Adrenal gland (tissue), 19 donors: ENCODE measurements at regions of chr12 and their contacts with region 1.

Region 1: GRCh38 chr12:104286538-104287482 is 16.7 kb upstream of the EID3 start:
- DNase-seq: peak; percentile 93 to 99 (median 96)
- H3K4me3 ChIP-seq: peak overlapping the region; percentile 2 to 94 (median 68)
- H3K27ac ChIP-seq: peak overlapping the region; percentile 93 to 99 (median 96)
- H3K4me1 ChIP-seq: peaks cover 24 to 36% of the 10 kb centered on the region in 2 donors
- H3K27me3 ChIP-seq: no peaks in the 10 kb centered on the region
- CTCF ChIP-seq: peak in 2 of 6 experiments; percentile 13 to 18
- POLR2A ChIP-seq: peak; percentile 89 to 95

Region 2: GRCh38 chr12:104121001-104121400 is 165.8 kb before region 1 on chr12:
- intact Hi-C with region 1: no loop called
- DNase-seq: no peak
- H3K4me3 ChIP-seq: no peak overlapping the region
- H3K27ac ChIP-seq: peak overlapping the region in 1 of 5 donors; percentile 23
- H3K4me1 ChIP-seq: peaks cover 20 to 30% of the 10 kb centered on the region in 2 donors
- H3K27me3 ChIP-seq: no peaks in the 10 kb centered on the region
- CTCF ChIP-seq: no peak
- POLR2A ChIP-seq: peak in 1 of 2 donors; percentile 32

Region 3: DNA sequence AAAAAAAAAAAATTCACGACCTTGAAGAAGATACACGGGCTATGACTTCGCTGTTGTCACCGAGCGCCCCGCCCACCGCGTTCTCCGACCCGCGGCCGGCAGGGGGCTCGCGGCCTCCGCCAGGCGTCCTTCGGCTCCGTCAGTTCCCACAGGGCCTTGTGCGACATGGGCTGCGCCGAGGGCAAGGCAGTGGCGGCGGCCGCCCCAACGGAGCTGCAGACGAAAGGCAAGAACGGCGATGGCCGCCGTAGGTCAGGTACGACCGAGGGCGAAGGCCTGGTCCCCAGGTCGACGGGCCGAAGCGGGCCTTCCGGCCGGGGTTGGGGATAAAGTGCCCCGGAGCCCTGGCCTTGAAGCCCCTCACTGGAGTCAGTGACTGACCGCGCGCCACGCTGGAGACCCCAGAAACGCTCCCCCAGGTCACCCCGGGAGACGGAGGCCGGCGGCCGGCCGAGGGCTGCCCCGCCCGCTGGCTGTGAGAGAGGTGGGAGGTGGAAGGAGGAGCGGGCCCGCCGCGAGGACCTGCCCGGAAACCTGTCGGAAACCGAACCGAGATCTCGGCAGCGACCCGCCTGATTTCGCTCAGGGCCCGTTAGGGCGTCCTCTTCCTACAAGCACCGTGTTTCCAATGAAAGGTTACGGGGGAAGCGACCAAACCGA is 71.0 kb before region 1 on chr12 and contains the start of gene TXNRD1:
- intact Hi-C with region 1: loop called (anchors 5 kb)
- DNase-seq: peak; percentile 88 to 93 (median 91)
- H3K4me3 ChIP-seq: peak within 1 kb of the TSS; percentile 10 to 81 (median 37)
- H3K27ac ChIP-seq: peak within 1 kb of the TSS; percentile 71 to 98 (median 91)
- H3K4me1 ChIP-seq: peaks cover 31 to 34% of the 10 kb centered on the region in 2 donors
- H3K27me3 ChIP-seq: no peaks in the 10 kb centered on the region
- CTCF ChIP-seq: peak; percentile 71 to 93 (median 87)
- POLR2A ChIP-seq: peak; percentile 68 to 92
- total RNA-seq, gene TXNRD1: 232 to 487 (median 294) TPM

Region 4: DNA sequence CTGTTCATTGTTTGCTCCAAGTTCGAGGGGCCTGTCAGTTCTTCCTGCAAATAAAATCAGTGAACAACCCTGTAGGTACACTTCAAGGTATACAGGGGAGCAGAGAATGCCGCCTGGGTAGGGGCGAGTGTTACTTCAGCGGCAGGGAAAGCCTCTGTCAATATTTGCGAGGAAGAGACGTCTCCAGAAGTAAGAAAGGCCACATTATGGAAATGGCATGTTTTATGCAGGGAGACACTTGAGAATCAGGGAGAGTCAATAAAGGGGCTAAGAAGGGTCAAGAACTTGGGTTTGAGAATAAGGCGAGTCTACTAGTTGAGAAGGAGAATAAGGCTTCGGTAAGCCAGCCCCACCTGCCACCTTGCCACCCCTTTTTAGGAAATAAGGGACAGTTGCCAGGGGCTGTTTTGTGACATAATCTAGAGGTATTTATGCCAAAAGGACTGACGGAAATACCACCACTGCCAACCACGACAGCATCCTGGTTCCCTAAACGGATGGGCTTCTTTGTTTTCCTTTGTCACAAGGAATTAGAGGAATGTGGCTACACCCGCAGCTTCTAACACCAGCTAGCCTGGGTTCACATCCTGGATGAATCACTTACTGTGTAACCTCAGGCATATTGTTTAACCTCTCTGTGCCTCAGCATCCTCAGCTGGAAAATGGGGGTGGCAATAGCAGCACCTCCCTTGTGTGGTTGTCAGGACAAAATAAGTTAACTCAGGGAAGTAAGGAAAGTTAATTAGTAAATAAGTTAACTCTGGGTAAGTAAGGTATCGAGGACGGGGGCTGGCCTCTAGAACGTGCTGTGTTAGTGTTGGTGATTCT is 84.4 kb after region 1 on chr12:
- intact Hi-C with region 1: no loop called
- DNase-seq: peak in 2 of 7 donors; percentile 16 to 31
- H3K4me3 ChIP-seq: no peak overlapping the region
- H3K27ac ChIP-seq: no peak overlapping the region
- H3K4me1 ChIP-seq: no peaks in the 10 kb centered on the region
- H3K27me3 ChIP-seq: no peaks in the 10 kb centered on the region
- CTCF ChIP-seq: no peak
- POLR2A ChIP-seq: no peak